Right ventricle myocardium inferior (tissue), 1 donor: ENCODE measurements at regions of chr1 and their contacts with region 1.

Region 1: GRCh38 chr1:23122023-23122748 is 46.5 kb downstream of the LUZP1 start:
- DNase-seq: no peak
- ATAC-seq: peak; percentile 20

Region 2: GRCh38 chr1:23044035-23044434 is 78.2 kb before region 1 on chr1:
- intact Hi-C with region 1: no loop called
- DNase-seq: no peak
- ATAC-seq: no peak

Region 3: GRCh38 chr1:23168457-23169194 is 46.4 kb after region 1 on chr1 and contains the start of gene LUZP1:
- intact Hi-C with region 1: loop called (anchors 5 kb)
- DNase-seq: peak; percentile 95
- ATAC-seq: peak; percentile 94
- total RNA-seq, gene LUZP1: 30.4 TPM